ENCODE measurements at regions of chr3 and their contacts with region 1.

Region 1: GRCh38 chr3:52685709-52686691 is at the starts of genes GNL3 and PBRM1:
- DNase-seq: peak; percentile 97
- ATAC-seq: peak; percentile 70
- H3K4me3 Mint-ChIP-seq: peak within 1 kb of the TSS; percentile 99
- H3K27ac Mint-ChIP-seq: peak within 1 kb of the TSS; percentile 99
- H3K4me1 Mint-ChIP-seq: peaks cover 75% of the 10 kb centered on the region
- H3K27me3 Mint-ChIP-seq: no peaks in the 10 kb centered on the region
- total RNA-seq, gene GNL3: 206 to 218 TPM
- total RNA-seq, gene PBRM1: 57.6 to 59.8 TPM

Region 2: DNA sequence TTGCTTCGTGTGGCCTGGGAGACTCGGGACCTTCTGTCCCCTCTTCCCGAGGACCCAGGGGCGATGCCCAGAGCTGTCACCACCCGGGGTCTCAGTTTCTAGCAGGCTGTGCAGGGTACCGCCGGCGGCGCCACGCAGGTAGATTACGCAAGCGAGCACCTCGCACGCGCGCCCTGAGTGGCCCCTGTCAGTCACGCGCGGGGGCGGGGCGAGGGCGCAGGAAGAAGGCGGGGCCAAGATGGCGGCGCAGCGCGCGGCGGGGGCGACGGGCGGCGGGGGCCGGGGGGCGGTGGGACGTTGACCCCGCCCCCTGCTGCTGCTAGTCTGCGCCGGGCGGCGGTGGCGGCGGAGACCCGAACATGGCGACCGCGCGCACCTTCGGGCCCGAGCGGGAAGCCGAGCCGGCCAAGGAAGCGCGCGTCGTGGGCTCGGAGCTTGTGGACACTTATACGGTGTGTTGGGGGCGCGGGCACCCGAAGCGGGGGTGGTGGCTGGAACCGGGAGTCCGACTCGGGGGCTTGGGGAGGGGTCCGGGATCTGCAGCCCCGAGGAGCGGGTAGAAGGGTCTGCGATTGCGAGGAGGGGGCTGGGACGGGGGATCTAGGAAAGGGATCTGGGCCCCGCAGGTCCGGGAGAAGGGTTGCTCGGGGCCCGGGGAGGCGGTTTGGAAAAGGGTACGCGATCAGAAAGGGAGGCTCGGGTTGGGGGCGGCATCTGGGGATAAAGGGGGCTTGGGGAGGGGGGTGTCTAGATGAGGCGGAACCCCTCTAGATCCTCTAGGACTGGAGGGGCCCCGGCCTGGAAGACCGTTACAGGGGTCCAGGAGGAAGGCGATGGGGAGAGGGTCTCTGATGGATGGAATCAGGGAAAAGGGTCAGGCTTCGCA is 230.5 kb before region 1 on chr3 and contains the start of gene NISCH:
- CTCF ChIA-PET with region 1: interaction called, 3 read pairs
- POLR2A ChIA-PET with region 1: no interaction called
- intact Hi-C with region 1: loop called in 1 of 2 experiments (anchors 1 kb)
- DNase-seq: peak; percentile 98
- ATAC-seq: peak; percentile 88
- H3K4me3 Mint-ChIP-seq: peak within 1 kb of the TSS; percentile 96
- H3K27ac Mint-ChIP-seq: peak within 1 kb of the TSS; percentile 95
- H3K4me1 Mint-ChIP-seq: peaks cover 36% of the 10 kb centered on the region
- H3K27me3 Mint-ChIP-seq: no peaks in the 10 kb centered on the region
- total RNA-seq, gene NISCH: 61.4 to 68.9 TPM

Region 3: DNA sequence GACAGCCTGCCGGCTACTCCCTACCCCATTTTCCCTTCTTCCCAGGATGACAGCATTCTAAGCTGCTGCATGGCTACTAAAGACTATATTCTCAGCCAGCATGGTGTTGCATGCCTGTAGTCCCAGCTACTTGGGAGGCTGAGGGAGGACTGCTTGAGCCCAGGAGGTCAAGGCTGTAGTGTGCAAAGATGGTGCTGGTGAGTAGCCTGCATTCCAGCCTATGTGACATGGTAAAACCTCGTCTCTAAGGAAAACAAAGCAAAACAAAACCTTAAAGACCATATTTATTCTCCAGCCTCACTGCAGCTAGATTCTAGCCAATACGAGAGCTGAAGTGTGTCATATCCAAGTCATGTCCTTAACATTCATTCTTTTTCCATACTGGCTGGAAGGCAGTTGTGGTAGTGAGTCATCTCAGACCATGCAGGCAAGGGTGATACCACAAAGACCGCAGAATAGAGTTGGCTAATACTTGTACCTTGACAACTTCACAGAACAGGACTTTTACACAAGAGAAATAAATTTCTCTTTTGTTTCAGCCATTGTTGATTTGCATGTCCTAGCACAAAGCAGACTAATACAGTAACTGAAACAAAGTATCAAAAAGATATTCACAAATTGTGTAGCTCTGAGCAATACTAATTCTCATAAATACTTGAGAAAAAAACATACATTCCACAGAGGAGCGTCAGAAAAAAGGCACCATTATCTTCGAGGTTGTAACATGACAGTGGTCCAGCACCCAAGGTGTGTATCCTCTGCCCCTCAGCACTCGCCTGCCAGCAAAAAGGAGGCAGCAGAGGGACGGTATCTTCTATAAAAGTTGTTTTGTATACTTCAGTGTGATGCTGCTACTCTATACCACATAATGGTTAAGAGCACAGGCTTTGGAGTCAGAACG is 15.1 kb before region 1 on chr3:
- CTCF ChIA-PET with region 1: interaction called, 13 read pairs
- POLR2A ChIA-PET with region 1: interaction called, 12 read pairs
- intact Hi-C with region 1: loop called (anchors 1 kb)
- DNase-seq: peak; percentile 69
- ATAC-seq: peak; percentile 85
- H3K4me3 Mint-ChIP-seq: peak overlapping the region; percentile 23
- H3K27ac Mint-ChIP-seq: peak overlapping the region; percentile 89
- H3K4me1 Mint-ChIP-seq: peaks cover 32% of the 10 kb centered on the region
- H3K27me3 Mint-ChIP-seq: no peaks in the 10 kb centered on the region

Region 4: DNA sequence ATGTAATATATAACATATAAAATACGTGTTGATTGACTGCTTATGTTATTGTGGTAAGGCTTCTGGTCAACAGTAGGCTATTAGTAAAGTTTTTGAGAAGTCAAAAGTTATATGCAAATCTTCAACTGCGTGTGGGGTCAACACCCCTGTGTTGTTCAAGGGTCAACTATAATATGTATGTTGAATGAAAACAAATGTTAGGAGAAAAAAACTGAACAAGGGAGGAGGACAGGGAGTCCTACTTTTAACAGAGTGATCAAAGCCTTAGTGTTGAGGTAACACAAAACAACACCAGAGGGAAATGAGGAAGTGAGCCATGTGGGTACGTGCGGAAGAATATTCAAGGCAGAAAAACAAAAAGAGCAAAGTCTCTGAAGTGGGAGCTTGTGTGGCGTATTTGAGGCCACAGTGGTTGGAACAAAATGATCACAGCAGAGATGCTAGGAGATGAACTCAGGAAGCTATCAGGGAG is 297.4 kb after region 1 on chr3:
- CTCF ChIA-PET with region 1: no interaction called
- POLR2A ChIA-PET with region 1: no interaction called
- intact Hi-C with region 1: loop called in 1 of 2 experiments (anchors 1 kb)
- DNase-seq: peak; percentile 86
- ATAC-seq: peak; percentile 83
- H3K4me3 Mint-ChIP-seq: peak overlapping the region; percentile 55
- H3K27ac Mint-ChIP-seq: peak overlapping the region; percentile 95
- H3K4me1 Mint-ChIP-seq: peaks cover 44% of the 10 kb centered on the region
- H3K27me3 Mint-ChIP-seq: no peaks in the 10 kb centered on the region

Measured in activated CD4-positive, alpha-beta T cell treated with anti-CD3 and anti-CD28 coated beads for 36 hours (primary cell).